ENCODE measurements at regions of chr17 and their contacts with region 1.

Region 1: DNA sequence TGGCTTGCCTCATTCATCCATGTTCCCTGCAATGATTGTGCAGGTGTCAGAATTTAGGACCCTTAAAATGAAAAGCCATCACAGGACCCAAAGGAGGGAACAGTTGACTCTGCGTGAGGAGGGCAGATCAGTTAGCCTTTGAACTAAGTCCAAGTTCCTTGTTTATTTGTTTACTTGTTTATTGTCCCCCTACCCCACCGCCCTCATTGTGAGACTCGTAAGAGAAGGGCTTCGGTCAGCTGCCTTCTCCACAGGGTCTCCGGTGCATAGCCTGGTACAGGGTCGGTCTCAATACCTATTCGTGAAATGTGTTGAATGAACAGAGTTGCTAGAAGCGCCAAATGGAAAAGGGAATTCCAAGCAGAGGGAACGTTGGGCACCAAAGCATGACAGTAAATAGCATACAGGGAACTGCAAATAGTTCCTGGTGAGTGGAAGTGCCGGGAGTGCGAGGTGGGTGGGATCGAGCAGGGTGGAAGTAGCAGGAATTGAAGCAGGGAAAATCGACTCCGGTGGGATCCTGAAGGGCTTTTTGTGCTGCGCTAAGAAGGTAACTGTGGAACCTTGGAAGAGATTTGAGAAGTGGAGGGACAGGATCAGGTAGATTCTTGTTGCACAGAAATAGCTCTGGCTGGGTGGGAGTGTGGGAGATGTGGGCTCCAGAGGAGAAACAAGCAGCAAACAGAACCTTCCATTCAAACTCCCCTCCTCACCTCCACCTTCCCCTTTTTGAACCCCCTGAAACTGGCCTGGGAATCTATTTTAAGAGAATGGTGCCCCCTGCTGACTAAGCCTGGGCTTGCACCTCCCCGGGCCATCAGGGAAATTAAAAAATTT is 12.7 kb downstream of the SLC35B1 start:
- DNase-seq: no peak
- H3K4me3 ChIP-seq: no peak overlapping the region
- CTCF ChIP-seq: peak; percentile 73

Region 2: GRCh38 chr17:49585422-49586027 is 109.5 kb before region 1 on chr17:
- CTCF ChIA-PET with region 1: interaction called, 1,118 read pairs
- POLR2A ChIA-PET with region 1: no interaction called
- DNase-seq: no peak
- H3K4me3 ChIP-seq: no peak overlapping the region
- CTCF ChIP-seq: no peak

Region 3: DNA sequence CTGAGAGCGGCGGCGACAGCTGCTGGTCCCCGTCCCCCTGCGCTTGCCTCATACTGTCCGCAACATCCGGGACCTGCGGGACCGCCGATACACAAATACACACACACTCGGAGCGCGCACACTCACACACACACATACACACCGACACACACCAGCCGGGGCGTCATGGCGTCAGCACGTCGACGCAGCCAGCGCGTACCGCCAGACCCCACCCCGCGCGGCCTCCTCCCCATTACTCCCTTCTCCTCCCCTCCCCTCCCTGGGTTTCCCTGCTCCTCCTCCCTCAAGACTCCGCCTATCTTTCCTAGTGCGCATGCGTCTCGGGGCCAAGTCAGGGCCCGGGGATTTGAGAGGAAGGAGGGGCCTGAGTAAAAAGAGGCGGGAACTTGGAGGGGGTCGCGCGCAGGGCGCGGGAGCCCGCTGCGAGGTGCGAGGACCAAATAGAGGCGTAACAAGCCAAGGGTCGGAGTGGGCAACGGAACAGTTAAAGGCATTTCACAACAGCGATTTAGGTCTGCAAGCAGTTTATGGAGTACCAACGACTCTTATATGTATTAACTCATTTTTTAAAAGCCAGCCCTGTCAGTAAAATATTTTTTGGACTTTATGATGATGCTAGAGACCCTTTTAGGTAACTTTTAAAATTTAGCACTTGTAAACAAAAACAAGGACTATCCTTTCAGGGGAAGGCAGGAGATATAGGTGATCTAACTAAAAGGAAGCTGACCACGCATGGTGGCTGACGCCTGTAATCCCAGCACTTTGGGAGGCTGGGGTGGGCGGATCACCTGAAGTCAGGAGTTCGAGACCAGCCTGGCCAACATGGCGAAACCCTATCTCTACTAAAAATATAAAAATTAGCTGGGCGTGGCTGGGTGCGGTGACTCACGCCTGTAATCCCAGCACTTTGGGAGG is 16.9 kb before region 1 on chr17 and contains the start of gene SPOP:
- CTCF ChIA-PET with region 1: interaction called, 35 read pairs
- POLR2A ChIA-PET with region 1: interaction called, 8 read pairs
- DNase-seq: peak; percentile 98
- H3K4me3 ChIP-seq: peak within 1 kb of the TSS; percentile 78
- CTCF ChIP-seq: no peak